HEK293 (cell line): ENCODE measurements at regions of chr2 and their contacts with region 1.

Region 1: GRCh38 chr2:204177977-204178540 is 241.5 kb downstream of the ICOS start:
- H3K4me3 ChIP-seq: no peak overlapping the region
- H3K27ac ChIP-seq: no peak overlapping the region
- H3K4me1 ChIP-seq: no peaks in the 10 kb centered on the region
- CTCF ChIP-seq: no peak

Region 2: GRCh38 chr2:204024503-204024902 is 153.6 kb before region 1 on chr2:
- CTCF ChIA-PET with region 1: interaction called, 21 read pairs
- POLR2A ChIA-PET with region 1: no interaction called
- H3K4me3 ChIP-seq: no peak overlapping the region
- H3K27ac ChIP-seq: no peak overlapping the region
- H3K4me1 ChIP-seq: peaks cover 6% of the 10 kb centered on the region; the same call in 1 of the 2 replicates
- CTCF ChIP-seq: peak; percentile 52; the same call in 1 of the 2 replicates

Region 3: DNA sequence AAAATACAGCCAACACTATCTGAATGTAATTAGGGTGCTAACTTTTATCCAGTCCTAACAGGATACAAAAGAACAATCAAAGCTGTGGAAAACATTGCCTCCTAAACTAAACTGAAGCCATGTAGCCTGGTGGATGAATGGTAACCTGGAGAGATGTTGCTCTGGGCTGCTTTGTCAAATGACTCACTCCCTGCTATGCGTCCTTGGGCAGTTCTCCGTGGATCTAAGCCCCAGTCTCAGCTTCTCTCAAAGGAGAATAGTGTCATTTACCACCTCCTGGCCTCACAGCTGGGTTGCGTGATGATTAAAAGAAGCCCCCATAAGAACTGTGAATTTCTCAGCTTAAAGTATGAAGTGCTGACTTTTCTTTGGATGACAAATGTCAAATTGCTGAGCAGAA is 37.8 kb before region 1 on chr2:
- CTCF ChIA-PET with region 1: interaction called, 17 read pairs
- POLR2A ChIA-PET with region 1: no interaction called
- H3K4me3 ChIP-seq: no peak overlapping the region
- H3K27ac ChIP-seq: no peak overlapping the region
- H3K4me1 ChIP-seq: no peaks in the 10 kb centered on the region
- CTCF ChIP-seq: no peak

Region 4: DNA sequence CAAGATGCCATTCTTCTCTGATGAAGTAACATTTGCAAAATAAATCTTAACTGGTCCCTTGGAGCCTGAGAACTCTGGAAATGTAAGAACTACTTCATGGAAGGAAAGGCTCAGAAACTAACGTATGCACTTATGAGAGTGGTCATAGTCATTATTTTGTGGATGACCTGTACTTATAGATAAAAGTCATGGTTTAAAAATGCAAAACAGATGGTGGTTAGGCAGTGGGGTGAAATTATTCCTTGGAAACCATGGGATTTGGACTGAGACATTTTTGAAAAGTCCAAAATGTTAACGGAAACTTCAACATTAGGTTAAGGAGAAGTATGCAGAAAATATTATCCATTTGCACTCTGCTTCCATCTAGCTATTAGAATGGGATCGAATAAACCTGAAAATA is 18.5 kb before region 1 on chr2:
- CTCF ChIA-PET with region 1: interaction called, 10 read pairs
- POLR2A ChIA-PET with region 1: no interaction called
- H3K4me3 ChIP-seq: no peak overlapping the region
- H3K27ac ChIP-seq: no peak overlapping the region
- H3K4me1 ChIP-seq: no peaks in the 10 kb centered on the region
- CTCF ChIP-seq: no peak

Region 5: GRCh38 chr2:204191574-204192335 is 13.7 kb after region 1 on chr2:
- CTCF ChIA-PET with region 1: interaction called, 16 read pairs
- POLR2A ChIA-PET with region 1: no interaction called
- H3K4me3 ChIP-seq: no peak overlapping the region
- H3K27ac ChIP-seq: no peak overlapping the region
- H3K4me1 ChIP-seq: no peaks in the 10 kb centered on the region
- CTCF ChIP-seq: no peak

Region 6: DNA sequence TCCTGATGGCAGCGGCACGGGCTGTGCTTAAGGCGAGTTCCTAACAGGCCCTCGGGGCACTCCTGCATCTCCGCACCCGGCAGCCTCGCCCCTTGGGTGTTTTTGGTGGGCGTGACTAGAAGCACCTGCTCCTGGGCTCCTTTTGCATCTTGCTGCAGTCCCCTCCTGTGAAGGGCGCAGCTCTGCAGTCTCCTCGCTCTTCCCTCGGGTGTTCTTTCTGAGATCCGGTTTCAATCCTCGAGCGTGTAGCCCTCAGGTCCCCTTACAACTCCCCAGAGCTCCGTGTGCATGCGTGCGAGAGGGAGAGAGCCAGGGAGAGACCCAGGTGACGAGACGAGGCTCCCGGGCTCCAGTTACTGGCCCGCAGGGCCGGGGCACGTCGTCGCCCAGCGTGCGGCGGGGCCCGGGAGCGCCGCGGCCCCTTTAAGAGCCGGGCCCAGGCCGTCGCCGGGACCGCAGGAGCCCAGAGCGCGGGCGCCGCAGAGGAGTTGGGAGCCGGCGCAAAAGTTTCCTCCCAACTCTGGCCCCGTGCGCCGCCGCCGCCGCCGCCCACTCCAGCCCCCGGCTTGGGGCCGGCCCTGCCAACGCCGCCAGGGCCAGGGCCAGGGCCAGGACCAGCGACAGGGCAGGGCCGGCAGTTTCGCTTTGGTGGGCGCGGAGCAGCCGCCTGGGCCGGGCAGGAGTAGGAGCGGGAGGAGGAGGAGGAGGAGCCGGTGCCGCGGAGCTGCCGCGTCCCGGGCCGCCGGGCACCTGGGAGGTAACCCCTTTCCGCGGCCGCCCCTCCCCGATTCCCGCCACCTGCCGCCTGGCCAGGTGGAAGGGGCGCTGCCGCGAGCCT is 367.2 kb after region 1 on chr2 and contains the start of gene PARD3B:
- CTCF ChIA-PET with region 1: no interaction called
- POLR2A ChIA-PET with region 1: no interaction called
- H3K4me3 ChIP-seq: peak within 1 kb of the TSS; percentile 75
- H3K27ac ChIP-seq: peak within 1 kb of the TSS; percentile 93
- H3K4me1 ChIP-seq: no peaks in the 10 kb centered on the region
- CTCF ChIP-seq: no peak